ENCODE measurements at regions of chr1 and their contacts with region 1.

Region 1: DNA sequence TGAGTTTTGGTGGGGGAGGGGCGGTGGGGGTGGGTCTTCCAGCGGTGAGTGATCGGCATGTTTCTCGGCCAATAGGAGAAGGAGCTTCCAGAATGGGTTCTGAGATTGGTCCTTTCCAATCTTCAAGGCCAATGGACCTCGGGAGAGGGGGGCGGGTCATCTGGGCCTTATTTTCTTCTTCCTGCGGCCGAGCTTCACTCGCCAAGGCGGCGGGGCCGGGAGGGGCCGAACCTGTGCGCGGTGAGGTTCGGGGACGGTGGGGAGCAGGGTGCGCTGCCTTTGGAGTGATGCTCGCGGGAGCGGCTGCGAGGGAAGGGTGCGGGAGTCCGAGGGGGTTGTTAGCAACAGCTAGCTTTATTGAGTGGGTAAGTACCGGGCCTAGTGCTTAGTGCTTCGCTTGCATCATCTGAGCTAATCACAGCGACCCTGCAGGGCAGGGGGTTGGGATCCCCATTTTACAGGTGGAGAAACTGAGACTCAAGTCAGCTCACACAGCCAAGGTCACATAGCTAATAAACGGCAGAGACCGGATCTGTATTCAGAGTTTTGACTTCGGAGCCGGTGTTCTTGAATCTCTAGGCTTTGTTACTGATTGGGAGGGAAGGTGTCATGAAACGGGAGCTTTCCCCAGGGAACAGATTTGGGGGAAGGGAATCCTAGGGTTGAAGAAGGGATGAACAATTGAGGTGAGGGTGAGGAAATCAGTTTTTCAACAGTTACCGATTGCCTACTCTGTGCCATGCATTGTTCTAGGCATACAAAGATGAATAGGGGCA is 549 bp downstream of the KDM4A start:
- DNase-seq: peak; percentile 100
- H3K27ac ChIP-seq: peak overlapping the region; percentile 97
- CTCF ChIP-seq: no peak

Region 2: GRCh38 chr1:43536320-43537105 is 114.0 kb before region 1 on chr1:
- CTCF ChIA-PET with region 1: no interaction called
- POLR2A ChIA-PET with region 1: no interaction called
- DNase-seq: no peak
- H3K27ac ChIP-seq: peak overlapping the region; percentile 71
- CTCF ChIP-seq: no peak

Region 3: DNA sequence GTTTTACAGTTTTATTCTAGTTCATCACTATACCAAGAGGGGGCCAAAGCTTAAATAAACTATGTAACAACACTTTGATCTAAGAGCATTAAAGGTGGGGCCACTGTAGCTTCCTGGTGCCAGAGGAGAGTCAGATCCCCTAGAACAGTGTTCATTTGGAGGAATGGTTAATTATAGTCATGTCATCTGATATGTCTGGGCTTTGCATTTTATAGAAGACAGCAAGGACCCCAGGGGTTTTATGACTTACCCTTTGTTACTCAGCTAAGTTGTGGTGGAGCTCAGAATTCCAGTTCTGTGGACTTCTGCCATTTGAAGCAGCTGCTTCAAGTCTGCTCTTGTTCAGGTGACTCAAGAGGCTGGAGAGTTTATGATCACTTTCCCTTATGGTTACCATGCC is 16.1 kb after region 1 on chr1:
- CTCF ChIA-PET with region 1: interaction called, 3 read pairs
- POLR2A ChIA-PET with region 1: interaction called, 15 read pairs
- DNase-seq: peak; percentile 97
- H3K27ac ChIP-seq: peak overlapping the region; percentile 82
- CTCF ChIP-seq: no peak